HEK293 (cell line): ENCODE measurements at regions of chr11 and their contacts with region 1.

Region 1: DNA sequence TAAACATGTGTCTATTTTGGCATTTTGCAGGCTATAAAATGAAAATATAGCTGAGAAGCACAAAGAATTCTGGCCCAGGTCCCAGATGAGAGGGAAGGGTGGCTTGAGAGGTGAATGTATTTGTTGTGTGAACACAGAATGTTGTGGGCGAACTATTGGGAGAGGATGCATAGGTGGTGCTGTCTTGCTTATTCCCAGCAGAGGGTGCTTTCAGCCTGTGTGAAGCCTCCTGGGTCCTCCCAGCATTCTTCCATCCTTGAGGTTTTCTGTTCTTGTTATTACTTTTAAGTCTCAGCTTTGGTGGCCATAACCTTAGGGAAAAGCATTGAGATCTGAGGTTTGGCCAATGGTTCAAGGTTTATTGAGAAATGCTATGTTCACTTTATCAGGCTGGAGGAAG is 108.7 kb upstream of the SNX19 start:
- H3K4me3 ChIP-seq: no peak overlapping the region
- H3K27ac ChIP-seq: no peak overlapping the region
- H3K4me1 ChIP-seq: no peaks in the 10 kb centered on the region
- CTCF ChIP-seq: no peak

Region 2: DNA sequence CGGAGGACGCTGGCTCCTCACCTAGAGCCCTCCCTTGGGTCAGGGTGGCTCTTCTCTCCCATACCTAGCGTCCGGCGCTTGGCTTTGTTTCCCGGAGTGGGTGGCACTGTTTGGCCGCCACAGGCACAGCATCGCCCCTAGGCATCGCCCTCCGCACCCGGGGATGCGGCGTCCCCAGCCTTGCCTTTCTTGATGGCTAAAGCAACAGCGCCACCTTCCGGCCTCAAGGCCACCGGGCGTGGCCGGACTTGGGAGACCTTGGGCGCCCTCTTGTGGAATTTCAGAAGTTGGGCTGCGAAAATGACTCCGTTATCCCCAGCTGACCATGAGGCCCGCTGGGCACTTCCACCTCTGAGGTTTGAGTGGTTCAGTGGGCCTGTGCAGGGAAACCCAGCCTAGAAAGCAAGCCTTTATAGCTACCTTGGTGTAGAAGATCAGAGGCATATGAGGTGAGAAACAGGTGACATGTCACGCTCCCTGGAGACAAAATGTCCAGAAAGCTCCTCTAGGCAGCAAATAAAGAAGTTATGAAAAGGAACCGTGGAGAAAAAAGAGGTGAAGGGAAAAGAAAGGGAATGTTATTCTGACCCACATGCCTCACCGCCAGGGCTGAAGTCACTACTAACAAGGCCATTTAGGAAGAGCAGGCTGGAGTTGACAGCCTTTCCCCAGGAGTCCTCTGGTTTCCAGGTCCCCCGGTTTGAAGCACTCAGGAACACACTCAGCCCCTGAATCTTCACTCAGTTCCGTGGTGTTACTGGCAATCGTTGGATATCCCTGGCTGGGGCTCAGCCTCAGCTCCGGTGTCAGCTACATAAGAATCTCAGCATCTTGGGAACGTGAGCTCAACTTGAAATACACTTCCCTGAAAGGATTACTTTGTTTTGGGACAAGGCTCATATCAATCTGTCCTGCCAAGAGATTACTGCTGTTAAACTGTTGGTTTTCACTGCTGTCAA is 162.8 kb before region 1 on chr11:
- CTCF ChIA-PET with region 1: no interaction called
- POLR2A ChIA-PET with region 1: no interaction called
- H3K4me3 ChIP-seq: no peak overlapping the region
- H3K27ac ChIP-seq: no peak overlapping the region
- H3K4me1 ChIP-seq: no peaks in the 10 kb centered on the region
- CTCF ChIP-seq: peak; percentile 96

Region 3: DNA sequence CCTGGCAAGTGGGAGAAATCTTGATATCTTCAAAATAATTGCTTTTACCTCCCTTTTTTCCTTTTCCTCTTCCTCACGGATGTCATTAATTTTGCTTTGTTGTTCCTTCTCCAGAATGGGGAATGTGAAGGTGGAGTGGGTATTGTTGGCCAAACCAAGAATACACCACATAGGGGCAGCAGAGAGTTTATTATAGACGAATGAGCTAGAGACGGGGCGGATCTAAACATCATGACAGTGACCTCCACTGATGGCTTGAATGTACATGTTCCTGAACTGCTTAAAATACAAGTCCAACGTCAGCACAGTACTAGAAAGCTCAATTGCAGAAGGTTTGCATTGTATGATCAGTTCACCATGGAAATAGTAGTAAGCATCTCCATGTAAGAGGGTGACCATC is 13.6 kb after region 1 on chr11:
- CTCF ChIA-PET with region 1: interaction called, 11 read pairs
- POLR2A ChIA-PET with region 1: no interaction called
- H3K4me3 ChIP-seq: no peak overlapping the region
- H3K27ac ChIP-seq: no peak overlapping the region
- H3K4me1 ChIP-seq: no peaks in the 10 kb centered on the region
- CTCF ChIP-seq: no peak

Region 4: GRCh38 chr11:131392528-131393255 is 367.7 kb after region 1 on chr11:
- CTCF ChIA-PET with region 1: no interaction called
- POLR2A ChIA-PET with region 1: no interaction called
- H3K4me3 ChIP-seq: no peak overlapping the region
- H3K27ac ChIP-seq: no peak overlapping the region
- H3K4me1 ChIP-seq: no peaks in the 10 kb centered on the region
- CTCF ChIP-seq: no peak